ENCODE measurements at regions of chr7 and their contacts with region 1.

Region 1: GRCh38 chr7:123865517-123866117 is 20.6 kb downstream of the HYAL4 start:
- DNase-seq: peak; percentile 33 to 55 (median 40)
- H3K4me3 ChIP-seq: no peak overlapping the region
- H3K4me3 Mint-ChIP-seq: no peak overlapping the region
- H3K27ac ChIP-seq: no peak overlapping the region
- H3K27ac Mint-ChIP-seq: no peak overlapping the region
- H3K4me1 ChIP-seq: no peaks in the 10 kb centered on the region
- H3K4me1 Mint-ChIP-seq: no peaks in the 10 kb centered on the region
- H3K27me3 ChIP-seq: no peaks in the 10 kb centered on the region
- H3K27me3 Mint-ChIP-seq: peaks cover 5 to 7% of the 10 kb centered on the region in 2 donors

Region 2: DNA sequence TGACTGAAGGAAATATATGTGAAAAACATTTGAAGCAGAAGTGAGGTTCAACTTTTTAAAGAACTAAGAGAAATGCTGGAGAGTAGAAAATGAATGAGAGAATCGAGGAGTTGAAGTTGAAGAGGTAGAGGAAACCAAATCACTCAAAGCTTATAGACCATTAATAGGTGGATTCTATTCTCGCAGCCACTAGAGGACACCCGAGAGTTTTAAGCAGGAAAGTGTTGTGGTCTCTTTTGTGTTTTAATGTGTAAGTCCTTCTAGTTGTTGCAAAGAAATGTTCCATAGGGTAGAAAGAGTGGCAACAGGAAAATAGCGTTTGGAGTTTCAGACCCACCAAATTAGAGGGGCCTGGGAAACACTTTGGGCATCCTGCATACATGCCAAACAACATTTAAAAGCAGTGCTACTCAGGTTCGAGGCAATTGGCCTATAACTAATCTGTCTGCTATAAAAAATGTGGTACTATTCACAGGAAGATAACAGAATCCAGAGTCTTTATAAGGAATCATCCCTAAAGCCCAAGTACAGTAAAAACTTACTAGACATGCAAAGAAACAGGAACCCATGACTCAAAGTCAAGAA is 794.8 kb before region 1 on chr7:
- CTCF ChIA-PET with region 1: no interaction called
- POLR2A ChIA-PET with region 1: no interaction called
- intact Hi-C with region 1: no loop called
- DNase-seq: no peak
- H3K4me3 ChIP-seq: no peak overlapping the region
- H3K4me3 Mint-ChIP-seq: no peak overlapping the region
- H3K27ac ChIP-seq: no peak overlapping the region
- H3K27ac Mint-ChIP-seq: no peak overlapping the region
- H3K4me1 ChIP-seq: no peaks in the 10 kb centered on the region
- H3K4me1 Mint-ChIP-seq: no peaks in the 10 kb centered on the region
- H3K27me3 ChIP-seq: no peaks in the 10 kb centered on the region
- H3K27me3 Mint-ChIP-seq: no peaks in the 10 kb centered on the region

Region 3: GRCh38 chr7:123580406-123581161 is 285.0 kb before region 1 on chr7:
- CTCF ChIA-PET with region 1: interaction called, 3 read pairs
- POLR2A ChIA-PET with region 1: no interaction called
- intact Hi-C with region 1: loop called (anchors 2 kb)
- DNase-seq: peak in 1 of 5 donors; percentile 2
- H3K4me3 ChIP-seq: no peak overlapping the region
- H3K4me3 Mint-ChIP-seq: no peak overlapping the region
- H3K27ac ChIP-seq: no peak overlapping the region
- H3K27ac Mint-ChIP-seq: no peak overlapping the region
- H3K4me1 ChIP-seq: no peaks in the 10 kb centered on the region
- H3K4me1 Mint-ChIP-seq: no peaks in the 10 kb centered on the region
- H3K27me3 ChIP-seq: no peaks in the 10 kb centered on the region
- H3K27me3 Mint-ChIP-seq: peaks cover 16 to 18% of the 10 kb centered on the region in 2 donors

Region 4: GRCh38 chr7:123635551-123636359 is 229.9 kb before region 1 on chr7:
- CTCF ChIA-PET with region 1: interaction called, 6 read pairs
- POLR2A ChIA-PET with region 1: no interaction called
- intact Hi-C with region 1: loop called (anchors 1 kb)
- DNase-seq: no peak
- H3K4me3 ChIP-seq: no peak overlapping the region
- H3K4me3 Mint-ChIP-seq: no peak overlapping the region
- H3K27ac ChIP-seq: no peak overlapping the region
- H3K27ac Mint-ChIP-seq: no peak overlapping the region
- H3K4me1 ChIP-seq: no peaks in the 10 kb centered on the region
- H3K4me1 Mint-ChIP-seq: no peaks in the 10 kb centered on the region
- H3K27me3 ChIP-seq: no peaks in the 10 kb centered on the region
- H3K27me3 Mint-ChIP-seq: peaks cover 7 to 15% of the 10 kb centered on the region in 2 donors

Region 5: GRCh38 chr7:123682690-123683089 is 182.9 kb before region 1 on chr7:
- CTCF ChIA-PET with region 1: interaction called, 42 read pairs
- POLR2A ChIA-PET with region 1: no interaction called
- intact Hi-C with region 1: loop called (anchors 1 kb)
- DNase-seq: peak; percentile 27 to 34 (median 29)
- H3K4me3 ChIP-seq: no peak overlapping the region
- H3K4me3 Mint-ChIP-seq: no peak overlapping the region
- H3K27ac ChIP-seq: no peak overlapping the region
- H3K27ac Mint-ChIP-seq: no peak overlapping the region
- H3K4me1 ChIP-seq: no peaks in the 10 kb centered on the region
- H3K4me1 Mint-ChIP-seq: peaks cover 0 to 4% (median 0%) of the 10 kb centered on the region in 4 donors
- H3K27me3 ChIP-seq: no peaks in the 10 kb centered on the region
- H3K27me3 Mint-ChIP-seq: no peaks in the 10 kb centered on the region

Region 6: DNA sequence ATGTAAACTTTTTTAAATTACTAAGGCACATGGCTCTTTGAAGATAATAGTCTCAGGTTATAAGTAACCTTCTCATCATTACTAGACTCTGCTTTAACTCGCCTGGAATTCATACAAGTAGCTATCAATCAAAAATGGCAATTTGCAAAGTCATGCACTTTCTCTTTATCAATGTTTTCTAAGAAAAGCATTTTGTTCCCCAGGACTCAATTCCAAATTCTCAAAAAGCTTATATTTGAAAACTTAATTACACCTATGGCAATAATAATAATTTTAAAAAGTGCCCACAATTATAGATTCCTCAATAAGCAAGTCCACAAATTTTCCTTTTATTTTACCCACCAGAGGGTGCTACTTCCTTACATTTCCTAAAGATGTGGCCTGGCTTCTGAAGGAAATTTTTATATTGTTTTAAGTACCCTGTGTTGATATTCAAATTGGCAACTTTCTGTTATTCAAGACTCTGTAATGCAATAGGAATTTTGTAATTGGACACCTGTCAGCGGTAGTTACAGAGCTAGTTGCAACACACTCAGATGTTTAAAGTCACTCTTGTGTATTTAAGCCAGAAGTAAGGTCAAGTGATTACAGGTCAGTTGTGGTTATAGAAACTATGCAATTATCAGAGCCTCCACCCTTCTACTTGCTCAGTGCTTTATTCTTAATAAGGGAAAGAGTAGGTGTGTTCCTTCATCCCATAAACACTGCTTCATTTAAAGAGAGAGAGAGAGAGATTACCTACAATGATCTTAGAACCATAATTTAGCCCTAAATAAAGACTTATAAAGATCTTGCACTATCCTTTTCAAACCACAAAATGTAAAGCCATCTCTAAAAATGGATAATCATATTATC is 67.7 kb before region 1 on chr7:
- CTCF ChIA-PET with region 1: interaction called, 7 read pairs
- POLR2A ChIA-PET with region 1: no interaction called
- intact Hi-C with region 1: loop called (anchors 2 kb)
- DNase-seq: peak in 1 of 5 donors; percentile 0
- H3K4me3 ChIP-seq: no peak overlapping the region
- H3K4me3 Mint-ChIP-seq: no peak overlapping the region
- H3K27ac ChIP-seq: no peak overlapping the region
- H3K27ac Mint-ChIP-seq: no peak overlapping the region
- H3K4me1 ChIP-seq: no peaks in the 10 kb centered on the region
- H3K4me1 Mint-ChIP-seq: no peaks in the 10 kb centered on the region
- H3K27me3 ChIP-seq: no peaks in the 10 kb centered on the region
- H3K27me3 Mint-ChIP-seq: peaks cover 1 to 4% of the 10 kb centered on the region in 2 donors

Region 7: DNA sequence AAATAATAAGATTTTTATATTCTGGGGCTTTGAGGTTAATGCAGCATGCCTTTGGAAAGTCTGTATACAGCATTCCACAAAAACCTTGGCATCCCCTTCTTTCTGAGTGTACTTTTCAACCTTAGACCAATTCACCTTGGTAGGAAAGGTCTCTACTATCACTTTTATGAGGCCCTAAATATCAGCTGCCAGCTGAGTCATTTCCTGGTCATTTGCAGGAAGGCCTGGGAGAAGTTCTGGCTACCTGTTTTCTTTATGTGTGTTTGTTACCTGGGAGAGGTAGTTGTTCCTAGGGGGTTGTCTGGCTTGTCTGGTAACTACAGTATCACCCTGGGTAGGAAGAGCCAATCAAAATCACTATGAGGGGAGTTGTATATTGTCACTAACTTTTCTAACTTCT is 63.5 kb after region 1 on chr7:
- CTCF ChIA-PET with region 1: no interaction called
- POLR2A ChIA-PET with region 1: no interaction called
- intact Hi-C with region 1: no loop called
- DNase-seq: no peak
- H3K4me3 ChIP-seq: no peak overlapping the region
- H3K4me3 Mint-ChIP-seq: no peak overlapping the region
- H3K27ac ChIP-seq: no peak overlapping the region
- H3K27ac Mint-ChIP-seq: no peak overlapping the region
- H3K4me1 ChIP-seq: no peaks in the 10 kb centered on the region
- H3K4me1 Mint-ChIP-seq: no peaks in the 10 kb centered on the region
- H3K27me3 ChIP-seq: no peaks in the 10 kb centered on the region
- H3K27me3 Mint-ChIP-seq: peaks cover 0 to 5% of the 10 kb centered on the region in 2 donors

Measured in CD4-positive, alpha-beta memory T cell (primary cell).